ENCODE measurements at regions of chr6 and their contacts with region 1.

Region 1: GRCh38 chr6:37860226-37860839 is 40.8 kb downstream of the ZFAND3 start:
- DNase-seq: no peak
- ATAC-seq: 0 out of 3 replicates have a peak, but pooled peaks have one; percentile 34
- H3K4me3 ChIP-seq: no peak overlapping the region
- H3K27ac ChIP-seq: no peak overlapping the region
- H3K4me1 ChIP-seq: no peaks in the 10 kb centered on the region
- H3K27me3 ChIP-seq: no peaks in the 10 kb centered on the region
- CTCF ChIP-seq: peak; percentile 45 to 53 (median 51)
- EP300 ChIP-seq: no peak
- POLR2A ChIP-seq: no peak
- RAD21 ChIP-seq: peak; percentile 46

Region 2: DNA sequence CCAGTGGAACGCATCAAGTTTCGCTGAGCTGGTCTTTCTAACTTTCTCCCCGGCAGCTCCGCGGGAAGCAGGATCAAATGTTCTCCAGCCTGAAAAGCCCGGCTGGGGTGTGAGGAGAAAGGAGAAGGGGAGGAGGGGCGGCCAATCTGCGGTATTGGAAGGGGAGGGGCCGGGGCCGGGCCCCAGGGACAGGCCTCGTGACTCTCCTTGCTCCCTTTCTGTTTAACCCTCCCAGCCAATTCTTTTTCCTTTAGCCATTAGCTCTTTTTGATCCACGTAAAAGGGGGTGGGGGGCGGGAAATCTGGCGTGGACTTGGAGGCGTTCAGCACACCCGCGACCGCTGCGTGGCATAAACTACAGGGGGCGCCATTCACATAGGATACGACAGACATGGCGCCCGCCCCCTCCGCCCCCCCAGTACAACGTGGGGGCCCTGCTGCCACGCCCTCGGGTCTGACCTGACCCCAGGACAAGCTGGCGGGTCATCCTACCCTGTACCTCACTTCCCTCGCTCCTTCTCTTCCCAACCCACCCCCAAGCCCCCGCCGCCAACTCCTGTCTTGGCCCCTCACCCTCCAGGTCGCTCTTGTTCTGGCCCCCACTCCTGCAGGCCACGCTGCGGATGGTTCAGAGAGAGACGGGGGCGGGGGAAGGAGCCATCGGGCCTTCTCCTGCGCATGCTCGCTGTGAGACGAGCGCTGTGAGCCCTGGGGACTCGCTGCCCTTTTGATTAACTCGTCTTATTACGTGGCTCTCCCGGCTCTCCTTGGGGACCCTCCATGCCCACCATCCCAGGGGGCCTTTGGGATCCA is 154.9 kb before region 1 on chr6:
- CTCF ChIA-PET with region 1: interaction called, 13 read pairs
- POLR2A ChIA-PET with region 1: no interaction called
- RAD21 ChIA-PET with region 1: interaction called, 14 read pairs
- SMC1A ChIA-PET with region 1: interaction called, 3 read pairs
- in situ Hi-C with region 1: no loop called
- intact Hi-C with region 1: loop called (anchors 10 kb)
- DNase-seq: peak; percentile 30
- ATAC-seq: peak; percentile 94
- H3K4me3 ChIP-seq: peak overlapping the region; percentile 38
- H3K27ac ChIP-seq: no peak overlapping the region; the same call in 1 of the 2 replicates
- H3K4me1 ChIP-seq: peaks cover 5% of the 10 kb centered on the region
- H3K27me3 ChIP-seq: peaks cover 0 to 3% of the 10 kb centered on the region in 2 experiments; a peak in 1 of 4 replicates
- CTCF ChIP-seq: peak; percentile 73 to 77 (median 75)
- EP300 ChIP-seq: no peak
- POLR2A ChIP-seq: peak; percentile 40
- RAD21 ChIP-seq: peak; percentile 64

Region 3: GRCh38 chr6:37819177-37819823 is 41.0 kb before region 1 on chr6 and contains the start of gene ZFAND3:
- CTCF ChIA-PET with region 1: interaction called, 16 read pairs
- POLR2A ChIA-PET with region 1: interaction called, 3 read pairs
- RAD21 ChIA-PET with region 1: interaction called, 7 read pairs
- SMC1A ChIA-PET with region 1: interaction called, 12 read pairs
- in situ Hi-C with region 1: no loop called
- intact Hi-C with region 1: loop called (anchors 5 kb)
- DNase-seq: peak; percentile 86
- ATAC-seq: peak; percentile 89
- H3K4me3 ChIP-seq: peak within 1 kb of the TSS; percentile 96
- H3K27ac ChIP-seq: peak within 1 kb of the TSS; percentile 98
- H3K4me1 ChIP-seq: peaks cover 7% of the 10 kb centered on the region
- H3K27me3 ChIP-seq: no peaks in the 10 kb centered on the region
- CTCF ChIP-seq: no peak
- EP300 ChIP-seq: peak in 1 of 2 experiments; percentile 31; a peak in 1 of 4 replicates
- POLR2A ChIP-seq: peak; percentile 59; the same call in 1 of the 2 replicates
- RAD21 ChIP-seq: no peak
- polyA plus RNA-seq, gene ZFAND3: 0.90 to 1.8 TPM

Region 4: GRCh38 chr6:37831457-37831856 is 28.9 kb before region 1 on chr6:
- CTCF ChIA-PET with region 1: interaction called, 13 read pairs
- POLR2A ChIA-PET with region 1: interaction called, 4 read pairs
- RAD21 ChIA-PET with region 1: interaction called, 14 read pairs
- SMC1A ChIA-PET with region 1: interaction called, 13 read pairs
- in situ Hi-C with region 1: no loop called
- intact Hi-C with region 1: no loop called
- DNase-seq: no peak
- ATAC-seq: peak; percentile 52
- H3K4me3 ChIP-seq: no peak overlapping the region
- H3K27ac ChIP-seq: peak overlapping the region; percentile 57
- H3K4me1 ChIP-seq: peaks cover 17% of the 10 kb centered on the region
- H3K27me3 ChIP-seq: no peaks in the 10 kb centered on the region
- CTCF ChIP-seq: no peak
- EP300 ChIP-seq: no peak
- POLR2A ChIP-seq: no peak
- RAD21 ChIP-seq: no peak

Region 5: GRCh38 chr6:38012573-38012972 is 152.2 kb after region 1 on chr6:
- CTCF ChIA-PET with region 1: interaction called, 6 read pairs
- POLR2A ChIA-PET with region 1: no interaction called
- RAD21 ChIA-PET with region 1: interaction called, 3 read pairs
- SMC1A ChIA-PET with region 1: interaction called, 8 read pairs
- in situ Hi-C with region 1: no loop called
- intact Hi-C with region 1: loop called (anchors 10 kb)
- DNase-seq: no peak
- ATAC-seq: peak; percentile 94
- H3K4me3 ChIP-seq: no peak overlapping the region
- H3K27ac ChIP-seq: no peak overlapping the region
- H3K4me1 ChIP-seq: no peaks in the 10 kb centered on the region
- H3K27me3 ChIP-seq: no peaks in the 10 kb centered on the region
- CTCF ChIP-seq: peak; percentile 72 to 85 (median 76)
- EP300 ChIP-seq: no peak
- POLR2A ChIP-seq: no peak
- RAD21 ChIP-seq: peak; percentile 90

Region 6: DNA sequence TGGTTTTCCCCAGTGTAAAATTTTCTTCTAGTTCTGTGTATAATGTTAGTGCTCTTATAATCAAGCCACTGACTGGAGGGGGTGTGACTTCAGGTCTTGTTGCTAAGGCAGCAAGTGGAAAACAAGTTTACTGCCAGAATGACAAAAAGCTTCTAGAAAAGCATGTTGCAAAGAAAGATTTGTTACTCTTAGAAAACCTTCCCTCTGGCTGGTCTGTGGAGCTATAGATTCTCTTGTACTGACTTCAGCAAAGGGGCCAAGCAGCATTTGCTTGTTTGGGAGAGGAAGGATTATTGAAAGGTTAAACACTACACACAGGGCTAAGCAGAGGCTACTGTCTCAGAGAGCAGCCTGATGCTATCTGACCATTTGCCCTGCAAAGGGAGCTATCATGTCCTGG is 490.6 kb after region 1 on chr6:
- CTCF ChIA-PET with region 1: no interaction called
- POLR2A ChIA-PET with region 1: no interaction called
- RAD21 ChIA-PET with region 1: no interaction called
- SMC1A ChIA-PET with region 1: no interaction called
- in situ Hi-C with region 1: no loop called
- intact Hi-C with region 1: no loop called
- DNase-seq: no peak
- ATAC-seq: no peak
- H3K4me3 ChIP-seq: no peak overlapping the region
- H3K27ac ChIP-seq: no peak overlapping the region
- H3K4me1 ChIP-seq: peaks cover 27% of the 10 kb centered on the region
- H3K27me3 ChIP-seq: no peaks in the 10 kb centered on the region
- CTCF ChIP-seq: no peak
- EP300 ChIP-seq: no peak
- POLR2A ChIP-seq: no peak
- RAD21 ChIP-seq: no peak

Measured in GM12878 (cell line).